Left cardiac atrium (tissue), 4 donors: ENCODE measurements at regions of chr4 and their contacts with region 1.

Region 1: GRCh38 chr4:21765810-21766407 is 182.7 kb downstream of the KCNIP4 start:
- DNase-seq: no peak
- ATAC-seq: peak in 1 of 2 donors; percentile 36

Region 2: GRCh38 chr4:20778896-20779295 is 987.0 kb before region 1 on chr4:
- intact Hi-C with region 1: loop called in 1 of 2 experiments (anchors 5 kb)
- DNase-seq: no peak
- ATAC-seq: no peak

Region 3: DNA sequence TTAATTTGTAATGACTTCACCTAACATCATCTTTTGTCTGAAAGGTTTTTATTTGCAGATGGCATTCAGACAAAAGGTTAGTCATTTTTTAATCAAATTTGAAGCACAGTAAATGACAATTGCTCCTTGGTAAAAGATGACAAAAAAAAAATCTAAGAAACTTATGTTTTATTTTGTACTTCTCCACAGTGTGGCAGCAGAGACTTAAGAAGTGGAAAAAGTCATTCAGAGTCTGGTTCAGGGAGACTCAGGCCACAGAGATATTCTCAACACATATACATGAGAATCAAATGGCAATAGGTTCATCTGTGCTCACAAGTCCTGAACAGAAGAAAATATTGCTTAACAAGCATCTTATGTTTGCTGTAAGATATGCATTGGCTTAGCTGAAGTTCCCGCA is 253.6 kb before region 1 on chr4:
- intact Hi-C with region 1: loop called (anchors 5 kb)
- DNase-seq: no peak
- ATAC-seq: no peak